ENCODE measurements at regions of chr11 and their contacts with region 1.

Region 1: GRCh38 chr11:62905927-62906531 is 15.1 kb downstream of the CHRM1 start:
- DNase-seq: peak; percentile 76
- H3K4me3 ChIP-seq: no peak overlapping the region
- H3K27ac ChIP-seq: no peak overlapping the region
- H3K4me1 ChIP-seq: peaks cover 7% of the 10 kb centered on the region
- H3K27me3 ChIP-seq: no peaks in the 10 kb centered on the region

Region 2: DNA sequence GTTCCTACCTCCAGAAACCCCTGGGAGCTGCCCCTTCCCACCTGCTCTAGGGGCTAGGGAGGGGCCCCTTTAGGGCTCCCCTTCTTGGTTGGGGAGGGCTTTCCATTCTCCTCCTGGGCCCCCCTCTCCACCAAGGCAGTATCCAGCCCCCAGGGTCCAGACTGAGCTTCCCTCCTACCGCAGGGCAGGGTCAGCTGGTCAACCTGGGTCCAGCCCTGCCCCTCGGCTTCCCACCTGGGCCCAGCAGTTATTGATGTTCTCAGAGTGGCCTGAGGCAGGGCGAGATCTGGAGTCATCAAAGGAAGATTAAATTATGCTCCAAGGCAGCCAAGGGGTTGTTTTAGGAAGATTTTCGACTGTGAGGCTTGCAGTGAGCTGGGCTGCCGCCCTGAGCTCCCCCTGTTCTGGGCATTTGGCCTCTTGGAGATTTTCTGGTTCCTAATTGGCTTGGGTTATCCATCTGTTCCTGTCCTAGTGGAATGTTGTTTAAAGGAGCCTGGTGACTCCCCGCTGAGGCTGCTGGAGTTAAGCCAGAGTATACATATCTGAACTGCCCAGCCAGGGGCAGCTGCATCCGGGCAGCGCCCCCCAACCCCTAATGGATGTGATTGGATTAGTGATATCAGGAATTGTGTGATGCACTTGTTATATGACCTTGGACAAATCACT is 111.4 kb after region 1 on chr11:
- in situ Hi-C with region 1: loop called (anchors 5 kb)
- DNase-seq: no peak
- H3K4me3 ChIP-seq: no peak overlapping the region
- H3K27ac ChIP-seq: no peak overlapping the region
- H3K4me1 ChIP-seq: no peaks in the 10 kb centered on the region
- H3K27me3 ChIP-seq: peaks cover 7% of the 10 kb centered on the region; the same call in 1 of the 2 replicates

Region 3: GRCh38 chr11:63212742-63213141 is 306.7 kb after region 1 on chr11:
- in situ Hi-C with region 1: loop called (anchors 10 kb)
- DNase-seq: peak; percentile 45
- H3K4me3 ChIP-seq: no peak overlapping the region
- H3K27ac ChIP-seq: no peak overlapping the region
- H3K4me1 ChIP-seq: no peaks in the 10 kb centered on the region
- H3K27me3 ChIP-seq: no peaks in the 10 kb centered on the region